Heart right ventricle (tissue), 16 donors: ENCODE measurements at regions of chr22 and their contacts with region 1.

Region 1: GRCh38 chr22:45640291-45640940 is 31.2 kb upstream of the ATXN10 start:
- DNase-seq: no peak
- ATAC-seq: peak in 7 of 8 donors; percentile 40 to 92 (median 67)
- H3K4me3 ChIP-seq: no peak overlapping the region
- H3K27ac ChIP-seq: no peak overlapping the region
- H3K4me1 ChIP-seq: peaks cover 0 to 24% (median 3%) of the 10 kb centered on the region in 9 donors
- H3K27me3 ChIP-seq: peaks cover 0 to 44% (median 25%) of the 10 kb centered on the region in 7 donors
- CTCF ChIP-seq: no peak

Region 2: DNA sequence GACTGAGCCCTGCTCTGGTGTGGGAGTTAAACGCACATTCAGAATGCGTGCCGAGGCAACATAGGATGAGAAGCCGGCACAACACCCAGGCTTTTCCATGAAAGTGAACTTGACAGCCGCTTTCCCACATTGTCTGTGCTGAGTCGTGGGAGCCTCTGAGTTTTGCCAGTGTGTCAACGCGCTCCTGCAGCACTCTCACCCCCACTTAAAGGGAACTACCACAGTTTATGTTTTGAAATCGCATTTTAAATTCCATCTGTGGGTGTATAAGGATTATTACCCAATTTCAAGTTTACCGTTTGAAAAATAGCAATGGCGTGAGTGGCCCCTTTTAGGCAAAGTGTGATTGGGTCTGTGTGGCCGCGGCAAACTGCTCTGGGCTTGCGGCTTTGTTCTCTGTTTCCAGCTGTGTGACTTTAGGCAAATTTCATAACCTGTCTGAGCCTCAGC is 56.3 kb before region 1 on chr22:
- intact Hi-C with region 1: loop called in 4 of 10 experiments (anchors 5 kb)
- DNase-seq: no peak
- ATAC-seq: peak in 1 of 8 donors; percentile 31
- H3K4me3 ChIP-seq: no peak overlapping the region
- H3K27ac ChIP-seq: no peak overlapping the region
- H3K4me1 ChIP-seq: peaks cover 0 to 16% (median 0%) of the 10 kb centered on the region in 9 donors
- H3K27me3 ChIP-seq: peaks cover 0 to 18% (median 3%) of the 10 kb centered on the region in 7 donors
- CTCF ChIP-seq: no peak

Region 3: GRCh38 chr22:45763236-45763624 is 122.8 kb after region 1 on chr22:
- intact Hi-C with region 1: no loop called
- DNase-seq: no peak
- ATAC-seq: peak in 2 of 8 donors; percentile 47 to 57
- H3K4me3 ChIP-seq: no peak overlapping the region
- H3K27ac ChIP-seq: no peak overlapping the region
- H3K4me1 ChIP-seq: peaks cover 0 to 6% (median 0%) of the 10 kb centered on the region in 9 donors
- H3K27me3 ChIP-seq: no peaks in the 10 kb centered on the region
- CTCF ChIP-seq: no peak

Region 4: DNA sequence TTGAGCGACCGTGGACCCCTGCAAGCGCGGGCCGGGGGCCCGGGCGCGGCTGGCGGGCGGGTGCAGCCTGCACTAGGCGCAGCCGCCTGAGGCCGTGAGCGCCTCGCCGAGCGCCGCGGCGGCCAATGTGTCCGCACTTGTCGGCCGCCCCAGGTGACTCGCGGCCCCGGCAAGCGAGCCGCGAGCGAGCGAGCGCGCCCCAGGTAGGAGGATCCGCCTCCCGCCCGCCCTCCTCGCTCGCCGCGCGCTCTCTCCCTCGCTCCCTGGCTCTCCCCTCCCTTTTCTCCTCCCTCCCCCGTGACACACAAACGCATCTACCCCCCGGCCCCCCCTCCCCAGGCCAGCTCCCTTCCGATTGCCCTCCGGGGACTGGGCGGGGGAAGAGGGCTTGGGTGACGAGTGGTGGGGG is 336.6 kb after region 1 on chr22 and contains the start of gene WNT7B:
- intact Hi-C with region 1: loop called in 2 of 10 experiments (anchors 2 kb)
- DNase-seq: no peak
- ATAC-seq: no peak
- H3K4me3 ChIP-seq: peak within 1 kb of the TSS in 8 of 10 donors; percentile 22 to 47 (median 32)
- H3K27ac ChIP-seq: no peak within 1 kb of the TSS
- H3K4me1 ChIP-seq: peaks cover 7 to 28% (median 22%) of the 10 kb centered on the region in 9 donors
- H3K27me3 ChIP-seq: peaks cover 38 to 67% (median 64%) of the 10 kb centered on the region in 7 donors
- CTCF ChIP-seq: no peak
- total RNA-seq, gene WNT7B: not detected